Calu3 (cell line): ENCODE measurements at regions of chr3 and their contacts with region 1.

Region 1: DNA sequence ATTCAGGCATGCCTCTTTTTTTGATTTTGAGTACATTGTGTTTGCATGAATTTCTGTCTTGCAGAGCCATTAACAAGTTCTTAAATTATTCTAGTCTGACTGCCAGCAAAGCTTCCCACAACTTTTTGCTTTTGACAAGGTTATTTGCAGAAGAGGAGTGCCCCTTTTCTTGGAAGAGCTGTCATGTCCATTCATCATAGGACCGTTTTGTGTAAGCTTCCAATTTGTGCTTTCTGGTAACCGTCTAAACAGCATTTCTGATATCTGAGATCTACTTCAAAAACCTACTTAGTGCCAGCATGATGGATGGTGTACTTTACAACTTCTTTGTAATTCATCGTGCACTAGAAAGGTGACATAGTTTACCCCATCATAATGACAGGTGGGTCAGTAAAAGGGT is 379.7 kb downstream of the NAALADL2 start:
- DNase-seq: no peak
- H3K4me3 Mint-ChIP-seq: no peak overlapping the region
- H3K27ac Mint-ChIP-seq: no peak overlapping the region
- H3K4me1 Mint-ChIP-seq: no peaks in the 10 kb centered on the region
- H3K27me3 Mint-ChIP-seq: no peaks in the 10 kb centered on the region
- CTCF ChIP-seq: no peak

Region 2: GRCh38 chr3:173958805-173959204 is 1280.0 kb before region 1 on chr3:
- CTCF ChIA-PET with region 1: interaction called, 11 read pairs
- intact Hi-C with region 1: no loop called
- DNase-seq: no peak
- H3K4me3 Mint-ChIP-seq: no peak overlapping the region
- H3K27ac Mint-ChIP-seq: no peak overlapping the region
- H3K4me1 Mint-ChIP-seq: no peaks in the 10 kb centered on the region
- H3K27me3 Mint-ChIP-seq: no peaks in the 10 kb centered on the region
- CTCF ChIP-seq: no peak

Region 3: DNA sequence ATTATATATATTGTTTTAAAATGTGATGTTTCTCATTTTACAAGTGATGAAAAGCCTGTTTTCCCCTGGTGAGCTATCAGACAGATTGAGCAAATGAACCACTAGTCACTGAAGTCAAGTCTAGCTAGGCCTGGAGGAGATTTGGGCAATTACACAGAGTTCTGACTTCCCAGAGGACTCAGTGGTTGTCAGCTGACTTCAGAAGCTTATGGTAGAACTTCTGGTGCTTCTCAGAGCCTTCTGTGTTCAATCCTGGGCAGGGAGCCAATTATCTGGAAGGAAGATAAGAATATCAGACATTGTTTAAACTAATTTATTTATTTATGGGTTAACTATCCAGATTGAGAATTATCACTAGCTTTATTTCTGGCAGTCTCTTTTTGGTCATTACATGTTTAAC is 417.3 kb before region 1 on chr3:
- CTCF ChIA-PET with region 1: no interaction called
- intact Hi-C with region 1: no loop called
- DNase-seq: peak; percentile 35
- H3K4me3 Mint-ChIP-seq: no peak overlapping the region
- H3K27ac Mint-ChIP-seq: peak overlapping the region; percentile 5
- H3K4me1 Mint-ChIP-seq: peaks cover 17% of the 10 kb centered on the region
- H3K27me3 Mint-ChIP-seq: no peaks in the 10 kb centered on the region
- CTCF ChIP-seq: no peak